Activated B cell treated with CpG ODN at 0.5 μM for 24 hours (primary cell): ENCODE measurements at regions of chr3 and their contacts with region 1.

Region 1: GRCh38 chr3:49802719-49803464 is at the start of gene INKA1:
- DNase-seq: peak; percentile 82
- ATAC-seq: peak; percentile 68
- H3K4me3 Mint-ChIP-seq: peak within 1 kb of the TSS; percentile 92
- H3K27ac Mint-ChIP-seq: peak within 1 kb of the TSS; percentile 92
- H3K4me1 Mint-ChIP-seq: peaks cover 48% of the 10 kb centered on the region
- H3K27me3 Mint-ChIP-seq: no peaks in the 10 kb centered on the region
- CTCF ChIP-seq: peak; percentile 45
- total RNA-seq, gene INKA1: 9.4 and 10.0 TPM in 2 replicates

Region 2: DNA sequence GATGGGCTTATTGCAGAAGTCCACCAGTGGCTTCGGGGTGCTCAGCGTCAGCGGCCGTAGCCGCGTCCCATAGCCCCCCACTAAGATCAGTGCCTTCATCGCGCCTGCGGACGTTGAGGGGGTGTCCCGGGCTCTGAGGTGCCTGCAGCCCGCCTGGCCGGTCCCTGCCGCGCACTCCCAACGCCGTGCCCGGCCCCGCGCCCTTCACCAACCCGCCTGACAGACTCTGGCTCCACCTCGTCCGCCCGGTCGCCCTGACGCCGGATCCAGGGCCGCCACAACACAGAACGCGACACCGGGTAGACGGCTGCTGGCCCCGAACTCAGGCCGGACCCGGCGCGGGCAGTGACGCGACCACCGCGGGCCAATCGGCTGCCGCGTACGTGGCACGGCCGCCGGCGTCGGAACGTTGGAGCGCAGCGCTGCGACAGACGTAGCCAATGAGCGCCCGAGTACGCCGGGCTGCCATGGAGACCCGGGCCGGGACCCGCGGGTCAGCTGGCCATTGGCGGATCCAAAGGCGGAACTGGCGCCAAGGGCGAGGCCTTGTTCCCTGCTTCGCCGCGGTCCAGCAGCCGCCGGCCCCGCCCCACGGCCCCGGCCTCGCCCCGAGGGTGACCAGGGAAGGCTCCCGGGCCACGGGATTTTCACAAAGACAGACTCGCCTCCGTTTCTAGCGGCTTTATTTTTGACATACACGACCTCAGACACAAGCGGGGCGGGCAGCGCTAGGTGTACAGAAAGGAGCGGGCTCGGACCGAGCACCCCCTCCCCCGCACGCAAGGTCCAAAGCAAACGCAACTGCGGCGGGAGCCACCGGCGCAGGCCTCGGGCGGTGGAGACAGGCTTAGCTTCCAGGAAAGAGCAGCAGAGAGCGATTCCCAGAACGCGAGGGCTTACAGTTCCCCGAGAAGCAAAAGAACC is 79.0 kb before region 1 on chr3 and contains the start of gene GMPPB:
- CTCF ChIA-PET with region 1: interaction called, 3 read pairs
- POLR2A ChIA-PET with region 1: interaction called, 5 read pairs
- intact Hi-C with region 1: loop called (anchors 1 kb)
- DNase-seq: peak; percentile 89
- ATAC-seq: peak; percentile 79
- H3K4me3 Mint-ChIP-seq: peak within 1 kb of the TSS; percentile 93
- H3K27ac Mint-ChIP-seq: peak within 1 kb of the TSS; percentile 98
- H3K4me1 Mint-ChIP-seq: peaks cover 59% of the 10 kb centered on the region
- H3K27me3 Mint-ChIP-seq: no peaks in the 10 kb centered on the region
- CTCF ChIP-seq: no peak
- total RNA-seq, gene GMPPB: 39.9 and 40.7 TPM in 2 replicates

Region 3: GRCh38 chr3:49839193-49839809 is 36.4 kb after region 1 on chr3:
- CTCF ChIA-PET with region 1: interaction called, 238 read pairs
- POLR2A ChIA-PET with region 1: interaction called, 106 read pairs
- intact Hi-C with region 1: loop called (anchors 1 kb)
- DNase-seq: peak; percentile 65
- ATAC-seq: peak; percentile 97
- H3K4me3 Mint-ChIP-seq: no peak overlapping the region
- H3K27ac Mint-ChIP-seq: peak overlapping the region; percentile 24
- H3K4me1 Mint-ChIP-seq: peaks cover 5% of the 10 kb centered on the region
- H3K27me3 Mint-ChIP-seq: no peaks in the 10 kb centered on the region
- CTCF ChIP-seq: peak; percentile 17

Region 4: GRCh38 chr3:49882166-49882565 is 79.3 kb after region 1 on chr3:
- CTCF ChIA-PET with region 1: no interaction called
- POLR2A ChIA-PET with region 1: no interaction called
- intact Hi-C with region 1: no loop called
- DNase-seq: no peak
- ATAC-seq: no peak
- H3K4me3 Mint-ChIP-seq: no peak overlapping the region
- H3K27ac Mint-ChIP-seq: no peak overlapping the region
- H3K4me1 Mint-ChIP-seq: no peaks in the 10 kb centered on the region
- H3K27me3 Mint-ChIP-seq: peaks cover 1% of the 10 kb centered on the region
- CTCF ChIP-seq: no peak

Region 5: GRCh38 chr3:49929331-49930240 is 126.7 kb after region 1 on chr3 and contains the start of gene MON1A:
- CTCF ChIA-PET with region 1: no interaction called
- POLR2A ChIA-PET with region 1: interaction called, 10 read pairs
- intact Hi-C with region 1: no loop called
- DNase-seq: peak; percentile 92
- ATAC-seq: peak; percentile 95
- H3K4me3 Mint-ChIP-seq: peak within 1 kb of the TSS; percentile 86
- H3K27ac Mint-ChIP-seq: peak within 1 kb of the TSS; percentile 79
- H3K4me1 Mint-ChIP-seq: peaks cover 16% of the 10 kb centered on the region
- H3K27me3 Mint-ChIP-seq: no peaks in the 10 kb centered on the region
- CTCF ChIP-seq: no peak
- total RNA-seq, gene MON1A: 6.3 and 7.1 TPM in 2 replicates

Region 6: DNA sequence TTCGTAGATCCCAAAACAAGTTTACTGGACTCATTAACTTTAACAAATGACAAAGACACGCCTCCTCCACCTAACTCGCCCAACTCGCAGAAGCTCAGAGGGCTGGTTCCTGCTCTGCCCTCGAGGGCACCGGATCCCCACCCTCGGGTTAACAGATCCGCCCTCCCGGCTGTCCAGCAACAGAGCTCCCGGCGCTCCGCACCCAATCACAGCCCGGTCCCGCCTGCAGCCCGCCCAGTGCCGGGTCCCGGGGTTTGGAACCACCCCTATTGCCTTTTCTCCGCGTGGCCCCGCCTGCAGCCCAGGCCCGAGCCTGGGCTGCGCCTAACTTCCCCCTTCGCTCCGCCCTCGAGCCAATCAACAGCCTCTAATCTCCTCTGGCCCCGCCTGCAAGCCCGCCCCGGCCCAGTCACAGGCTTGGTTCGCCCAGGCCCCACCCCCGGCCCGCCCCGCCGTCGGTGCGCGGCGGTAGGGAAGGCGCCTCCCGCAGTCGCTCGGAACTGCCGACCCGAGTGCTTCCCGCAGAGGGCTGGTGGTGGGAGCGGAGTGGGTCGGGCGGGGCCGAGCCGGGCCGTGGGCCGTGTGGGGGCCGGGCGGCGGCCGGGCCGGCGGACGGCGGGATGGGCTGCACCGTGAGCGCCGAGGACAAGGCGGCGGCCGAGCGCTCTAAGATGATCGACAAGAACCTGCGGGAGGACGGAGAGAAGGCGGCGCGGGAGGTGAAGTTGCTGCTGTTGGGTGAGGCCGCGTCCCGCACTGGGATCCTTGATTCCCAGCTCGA is 433.0 kb after region 1 on chr3 and contains the start of gene GNAI2:
- CTCF ChIA-PET with region 1: no interaction called
- POLR2A ChIA-PET with region 1: no interaction called
- intact Hi-C with region 1: loop called (anchors 10 kb)
- DNase-seq: peak; percentile 97
- ATAC-seq: peak; percentile 89
- H3K4me3 Mint-ChIP-seq: peak within 1 kb of the TSS; percentile 95
- H3K27ac Mint-ChIP-seq: peak within 1 kb of the TSS; percentile 91
- H3K4me1 Mint-ChIP-seq: peaks cover 54% of the 10 kb centered on the region
- H3K27me3 Mint-ChIP-seq: no peaks in the 10 kb centered on the region
- CTCF ChIP-seq: no peak
- total RNA-seq, gene GNAI2: 281 and 295 TPM in 2 replicates